Panc1 (cell line): ENCODE measurements at regions of chr10 and their contacts with region 1.

Region 1: GRCh38 chr10:112904000-112904399 is 46.0 kb upstream of the TCF7L2 start:
- DNase-seq: no peak
- ATAC-seq: no peak
- H3K4me3 ChIP-seq: no peak overlapping the region
- H3K27ac ChIP-seq: no peak overlapping the region
- H3K4me1 ChIP-seq: no peaks in the 10 kb centered on the region
- H3K27me3 ChIP-seq: no peaks in the 10 kb centered on the region
- CTCF ChIP-seq: no peak

Region 2: DNA sequence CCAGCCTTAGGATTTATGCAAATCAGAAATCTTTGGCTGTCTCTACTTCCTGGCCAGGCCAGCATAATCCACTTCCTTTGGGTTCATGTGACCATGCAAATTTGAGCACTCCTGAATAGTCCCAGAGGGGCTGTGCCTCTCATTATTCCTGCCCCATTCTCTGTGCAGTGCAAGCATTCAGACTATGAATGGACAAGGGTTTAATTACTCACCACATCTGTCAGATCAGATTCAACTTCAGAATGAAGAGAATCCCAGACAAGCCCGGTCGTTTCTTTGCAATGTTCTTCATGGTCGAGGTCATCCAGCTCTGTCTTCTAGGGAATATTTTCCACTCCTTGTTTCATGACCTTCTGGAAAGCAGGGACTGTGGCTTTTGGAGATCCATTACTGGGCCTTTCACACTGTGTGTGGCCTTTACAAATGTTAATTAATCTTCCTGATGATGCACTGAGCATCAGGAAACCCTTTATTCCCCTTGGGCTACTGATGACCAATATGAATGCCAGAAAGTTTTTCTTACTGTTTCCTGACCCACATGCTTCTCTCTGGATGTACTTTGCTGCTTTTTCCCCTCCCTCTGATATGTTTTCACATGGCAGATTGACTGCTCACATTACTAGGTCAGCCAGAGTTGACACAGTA is 171.6 kb before region 1 on chr10:
- CTCF ChIA-PET with region 1: no interaction called
- POLR2A ChIA-PET with region 1: interaction called, 26 read pairs
- in situ Hi-C with region 1: no loop called
- intact Hi-C with region 1: no loop called
- DNase-seq: no peak
- ATAC-seq: no peak
- H3K4me3 ChIP-seq: no peak overlapping the region
- H3K27ac ChIP-seq: no peak overlapping the region
- H3K4me1 ChIP-seq: no peaks in the 10 kb centered on the region
- H3K27me3 ChIP-seq: no peaks in the 10 kb centered on the region
- CTCF ChIP-seq: no peak